CD8-positive, alpha-beta memory T cell (primary cell): ENCODE measurements at regions of chr1 and their contacts with region 1.

Region 1: DNA sequence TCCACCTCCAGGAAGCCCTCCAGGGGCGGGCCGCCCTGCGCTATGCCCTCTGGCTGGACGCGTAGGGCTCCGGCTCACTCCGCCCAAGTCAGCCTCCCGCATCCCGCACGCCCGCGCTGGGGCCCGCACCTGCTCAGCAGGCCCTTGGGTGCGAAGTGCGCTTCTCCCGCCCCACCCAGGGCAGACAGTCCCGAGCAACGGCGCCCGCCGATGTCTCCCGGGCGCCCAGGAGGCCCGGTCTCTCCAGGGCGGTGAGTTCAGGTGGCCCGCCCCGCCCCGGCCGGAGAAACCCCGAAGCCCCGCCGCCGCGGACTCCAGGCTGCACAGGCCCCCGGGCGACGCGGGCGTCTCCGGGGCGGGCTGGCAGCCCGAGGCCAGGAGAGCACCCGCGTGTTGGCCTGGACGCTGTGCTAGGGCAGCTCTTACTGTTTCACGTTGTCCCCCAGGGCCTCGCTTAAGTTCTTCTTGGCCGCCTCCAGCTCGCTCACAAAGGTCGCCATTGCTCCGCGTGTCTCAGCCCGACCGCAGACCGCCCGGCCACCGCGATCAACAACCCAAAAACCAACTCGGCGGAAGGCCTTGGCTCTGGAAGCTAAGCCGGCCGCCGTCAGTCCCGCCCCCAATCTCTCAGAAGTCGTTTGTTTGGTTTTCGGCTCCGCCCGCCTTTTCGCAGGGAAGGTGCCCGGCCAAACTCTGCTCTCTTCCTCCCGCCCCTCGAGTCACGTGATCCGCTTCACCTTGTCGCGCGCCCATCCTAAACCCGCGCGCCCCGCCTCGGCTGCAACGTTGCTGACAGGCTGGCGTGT is at the start of gene TADA1:
- DNase-seq: peak; percentile 96 to 97 (median 96)
- H3K4me3 ChIP-seq: peak within 1 kb of the TSS; percentile 79
- H3K4me3 Mint-ChIP-seq: peak within 1 kb of the TSS; percentile 91 to 99 (median 97)
- H3K27ac ChIP-seq: peak within 1 kb of the TSS; percentile 81
- H3K27ac Mint-ChIP-seq: peak within 1 kb of the TSS; percentile 78 to 99 (median 97)
- H3K4me1 ChIP-seq: peaks cover 25% of the 10 kb centered on the region
- H3K4me1 Mint-ChIP-seq: peaks cover 43 to 58% (median 56%) of the 10 kb centered on the region in 3 donors
- H3K27me3 ChIP-seq: no peaks in the 10 kb centered on the region
- H3K27me3 Mint-ChIP-seq: peaks cover 0 to 5% of the 10 kb centered on the region in 2 donors
- total RNA-seq, gene TADA1: 18.5 to 18.6 TPM

Region 2: GRCh38 chr1:166838766-166839599 is 37.0 kb before region 1 on chr1 and contains the start of gene POGK:
- CTCF ChIA-PET with region 1: interaction called, 6 read pairs
- POLR2A ChIA-PET with region 1: interaction called, 23 read pairs
- DNase-seq: peak; percentile 69 to 85 (median 79)
- H3K4me3 ChIP-seq: peak within 1 kb of the TSS; percentile 66
- H3K4me3 Mint-ChIP-seq: peak within 1 kb of the TSS; percentile 91 to 95 (median 94)
- H3K27ac ChIP-seq: peak within 1 kb of the TSS; percentile 56
- H3K27ac Mint-ChIP-seq: peak within 1 kb of the TSS; percentile 93 to 99 (median 96)
- H3K4me1 ChIP-seq: peaks cover 23% of the 10 kb centered on the region
- H3K4me1 Mint-ChIP-seq: peaks cover 34 to 49% (median 45%) of the 10 kb centered on the region in 3 donors
- H3K27me3 ChIP-seq: no peaks in the 10 kb centered on the region
- H3K27me3 Mint-ChIP-seq: peaks cover 0 to 5% of the 10 kb centered on the region in 2 donors
- total RNA-seq, gene POGK: 71.9 to 76.0 TPM

Region 3: DNA sequence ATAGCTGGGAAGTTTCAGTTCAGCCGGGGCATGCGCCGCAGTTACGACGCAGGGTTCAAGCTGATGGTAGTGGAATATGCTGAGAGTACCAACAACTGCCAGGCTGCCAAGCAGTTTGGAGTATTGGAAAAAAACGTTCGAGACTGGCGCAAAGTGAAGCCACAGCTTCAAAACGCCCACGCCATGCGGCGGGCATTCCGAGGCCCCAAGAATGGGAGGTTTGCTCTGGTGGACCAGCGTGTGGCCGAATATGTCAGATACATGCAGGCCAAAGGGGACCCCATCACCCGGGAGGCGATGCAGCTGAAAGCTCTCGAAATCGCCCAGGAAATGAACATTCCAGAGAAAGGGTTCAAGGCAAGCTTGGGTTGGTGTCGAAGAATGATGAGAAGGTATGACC is 26.8 kb before region 1 on chr1:
- CTCF ChIA-PET with region 1: no interaction called
- POLR2A ChIA-PET with region 1: no interaction called
- DNase-seq: no peak
- H3K4me3 ChIP-seq: no peak overlapping the region
- H3K4me3 Mint-ChIP-seq: no peak overlapping the region
- H3K27ac ChIP-seq: no peak overlapping the region
- H3K27ac Mint-ChIP-seq: no peak overlapping the region
- H3K4me1 ChIP-seq: no peaks in the 10 kb centered on the region
- H3K4me1 Mint-ChIP-seq: peaks cover 36 to 84% (median 51%) of the 10 kb centered on the region in 3 donors
- H3K27me3 ChIP-seq: no peaks in the 10 kb centered on the region
- H3K27me3 Mint-ChIP-seq: no peaks in the 10 kb centered on the region

Region 4: GRCh38 chr1:166947398-166948043 is 71.6 kb after region 1 on chr1:
- CTCF ChIA-PET with region 1: no interaction called
- POLR2A ChIA-PET with region 1: no interaction called
- DNase-seq: peak in 1 of 5 donors; percentile 9
- H3K4me3 ChIP-seq: no peak overlapping the region
- H3K4me3 Mint-ChIP-seq: peak overlapping the region in 1 of 7 donors; percentile 52
- H3K27ac ChIP-seq: no peak overlapping the region
- H3K27ac Mint-ChIP-seq: no peak overlapping the region
- H3K4me1 ChIP-seq: peaks cover 7% of the 10 kb centered on the region
- H3K4me1 Mint-ChIP-seq: peaks cover 2 to 21% (median 12%) of the 10 kb centered on the region in 3 donors
- H3K27me3 ChIP-seq: peaks cover 9% of the 10 kb centered on the region
- H3K27me3 Mint-ChIP-seq: peaks cover 22 to 58% of the 10 kb centered on the region in 2 donors